Right ventricle myocardium inferior (tissue), 1 donor: ENCODE measurements at regions of chr19 and their contacts with region 1.

Region 1: GRCh38 chr19:19821366-19821951 is at the start of gene ZNF506:
- DNase-seq: peak; percentile 99
- ATAC-seq: peak; percentile 98
- total RNA-seq, gene ZNF506: 9.8 TPM

Region 2: GRCh38 chr19:19663256-19664038 is 158.0 kb before region 1 on chr19 and contains the start of gene ATP13A1:
- intact Hi-C with region 1: loop called (anchors 5 kb)
- DNase-seq: peak; percentile 99
- ATAC-seq: peak; percentile 98
- total RNA-seq, gene ATP13A1: 20.1 TPM

Region 3: GRCh38 chr19:19776041-19777008 is 45.1 kb before region 1 on chr19:
- intact Hi-C with region 1: loop called (anchors 2 kb)
- DNase-seq: peak; percentile 99
- ATAC-seq: peak; percentile 100

Region 4: DNA sequence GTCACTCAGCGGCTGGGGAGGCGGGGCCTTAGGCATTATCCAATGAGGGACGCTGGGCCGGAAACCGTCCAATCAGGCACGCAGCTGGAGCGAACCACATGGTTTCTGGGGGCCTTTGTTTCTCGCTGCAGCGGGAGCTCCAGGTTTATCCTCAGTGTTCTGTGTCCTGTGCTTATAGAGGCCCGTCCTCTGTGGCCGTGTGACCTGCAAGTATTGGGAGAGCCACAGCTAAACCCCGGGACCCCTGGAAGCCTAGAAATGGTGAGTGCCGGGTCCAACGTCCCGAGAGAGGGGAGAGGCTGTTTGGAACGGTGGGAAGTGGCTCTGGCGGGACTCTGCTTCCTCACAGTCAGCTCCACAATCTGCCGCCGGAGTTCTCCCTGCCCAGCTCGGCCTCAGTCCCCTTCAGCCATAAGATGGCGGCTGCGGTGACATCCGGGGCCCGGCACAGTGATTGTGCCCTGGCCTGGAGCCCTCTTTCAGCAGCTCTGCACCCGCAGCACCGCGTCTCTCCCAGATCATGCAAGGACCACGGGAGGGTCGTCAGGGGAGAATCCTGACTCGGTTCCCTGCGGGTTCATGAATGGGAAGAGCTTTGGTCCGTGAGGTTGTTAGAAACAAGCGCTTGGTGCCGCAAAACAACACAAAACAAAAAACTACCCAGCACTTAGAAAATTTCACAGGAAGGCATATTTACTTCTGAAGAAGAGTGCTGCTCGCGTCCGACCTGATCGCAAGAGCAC is 44.5 kb after region 1 on chr19 and contains the start of gene ZNF253:
- intact Hi-C with region 1: loop called (anchors 5 kb)
- DNase-seq: peak; percentile 98
- ATAC-seq: peak; percentile 99
- total RNA-seq, gene ZNF253: 11.3 TPM

Region 5: DNA sequence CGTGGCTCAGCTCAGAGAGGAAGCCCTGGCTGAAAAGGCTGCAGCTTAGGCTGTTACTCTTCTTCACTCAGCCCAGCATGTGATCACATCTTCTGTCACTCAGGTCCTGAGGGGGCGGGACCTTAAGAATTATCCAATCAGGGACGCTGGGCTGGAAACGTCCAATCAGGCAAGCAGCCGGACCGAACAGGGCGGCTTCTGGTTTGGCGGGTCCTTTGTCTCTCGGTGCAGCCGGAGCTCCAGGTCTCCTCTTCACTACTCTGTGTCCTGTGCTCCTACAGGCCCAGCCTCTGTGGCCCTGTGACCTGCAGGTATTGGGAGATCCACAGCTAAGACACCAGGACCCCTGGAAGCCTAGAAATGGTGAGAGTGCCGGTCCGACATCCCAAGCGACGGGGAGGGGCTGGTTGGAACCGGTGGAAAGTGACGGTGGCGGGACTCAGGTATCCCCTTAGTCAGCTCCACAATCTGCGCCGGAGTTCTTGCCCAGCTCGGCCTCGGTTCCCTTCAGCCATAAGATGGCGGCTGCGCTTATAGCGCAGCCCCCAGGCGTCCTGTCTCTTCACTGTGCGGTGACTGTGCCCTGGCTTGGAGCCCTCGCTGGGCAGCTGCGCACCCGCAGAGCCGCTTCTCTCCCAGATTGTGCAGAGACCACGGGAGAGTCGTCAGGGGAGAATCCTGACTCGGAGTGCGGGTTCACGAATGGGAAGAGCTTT is 79.4 kb after region 1 on chr19 and contains the start of gene ZNF93:
- intact Hi-C with region 1: loop called (anchors 5 kb)
- DNase-seq: peak; percentile 94
- ATAC-seq: peak; percentile 100
- total RNA-seq, gene ZNF93: 1.7 TPM